Right cardiac atrium (tissue), 5 donors: ENCODE measurements at regions of chr2 and their contacts with region 1.

Region 1: DNA sequence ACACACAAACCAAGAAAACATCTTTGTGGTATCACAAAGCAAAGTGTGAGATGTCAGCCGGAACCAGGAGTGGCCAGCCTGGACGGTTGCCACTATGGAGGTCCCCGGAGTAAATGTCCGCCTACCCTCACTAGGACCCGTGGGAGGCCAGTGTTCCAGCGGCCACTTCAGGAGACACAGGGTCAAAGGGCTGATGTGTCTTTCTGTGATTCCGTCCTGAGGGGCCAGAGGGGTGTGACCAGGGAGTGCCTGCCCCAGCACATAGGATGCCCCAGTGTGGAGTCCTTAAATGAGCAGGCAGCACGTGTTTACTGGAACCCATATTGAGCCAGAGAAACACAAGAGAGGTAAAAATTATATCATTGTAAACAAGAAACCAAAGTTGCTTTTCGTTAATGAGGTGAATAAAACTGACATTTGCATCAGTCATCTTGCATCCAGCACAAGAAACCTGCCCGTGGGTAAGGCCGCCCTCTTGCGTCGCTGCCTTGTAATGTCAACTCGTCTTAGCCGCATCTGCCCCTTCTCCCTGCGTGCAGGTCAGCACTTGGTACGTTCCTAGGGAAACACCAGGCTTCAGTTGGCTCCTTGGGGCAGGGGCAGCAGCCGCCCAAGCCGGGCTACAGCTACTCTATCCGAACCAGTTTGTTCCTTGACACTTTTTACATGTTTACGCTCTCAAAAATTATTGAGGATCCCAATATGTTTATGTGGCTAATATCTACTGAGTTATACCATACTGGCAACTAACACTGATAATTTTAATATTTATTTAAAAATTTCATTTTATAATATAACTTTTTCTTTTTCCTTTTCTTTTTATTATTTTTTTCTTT is 46.7 kb upstream of the LAPTM4A start:
- DNase-seq: peak; percentile 82 to 92 (median 89)
- ATAC-seq: peak; percentile 76 to 84
- H3K4me3 ChIP-seq: no peak overlapping the region
- H3K27ac ChIP-seq: no peak overlapping the region
- H3K4me1 ChIP-seq: no peaks in the 10 kb centered on the region
- H3K27me3 ChIP-seq: no peaks in the 10 kb centered on the region

Region 2: DNA sequence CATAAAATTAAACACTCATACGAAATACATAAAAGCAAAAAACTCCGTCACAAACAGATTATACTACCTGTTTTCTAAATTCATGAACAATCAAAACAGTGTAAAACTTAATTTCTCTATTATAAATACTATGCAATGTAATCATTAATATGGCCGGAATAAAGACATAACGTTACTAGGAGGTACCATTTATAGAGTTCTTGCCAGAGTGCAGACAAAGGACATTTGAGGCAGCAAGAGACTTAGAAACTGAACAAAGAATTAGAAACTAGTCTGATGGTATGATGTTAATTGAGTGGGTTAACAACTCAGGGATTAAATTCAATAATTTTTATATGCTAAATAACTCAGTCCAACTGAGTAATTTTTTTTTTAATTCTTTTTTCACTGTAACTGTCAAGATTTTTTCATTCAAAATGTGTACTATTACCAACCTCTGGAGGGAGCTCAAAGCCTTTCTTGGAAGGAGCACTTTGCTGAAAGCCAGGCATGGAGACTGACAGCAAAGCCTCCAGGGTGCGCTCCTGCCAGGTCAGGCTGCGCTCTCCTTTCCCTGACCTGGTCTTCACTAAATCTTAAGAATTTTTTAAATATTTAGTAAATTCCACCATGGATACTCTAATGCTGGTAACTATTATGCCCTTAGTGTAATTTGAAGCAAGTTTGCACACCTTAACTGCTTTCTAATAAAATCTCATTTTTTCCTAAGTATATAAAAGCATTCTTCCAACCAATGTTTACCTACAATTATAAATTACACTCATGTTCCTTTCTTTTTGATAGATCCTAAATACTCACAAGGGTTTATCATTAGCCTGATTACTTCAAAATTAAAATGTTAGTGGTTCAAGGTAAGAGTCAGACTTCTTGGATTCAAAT is 142.3 kb before region 1 on chr2:
- intact Hi-C with region 1: loop called in 2 of 4 experiments (anchors 2 to 5 kb)
- DNase-seq: peak; percentile 28 to 66 (median 59)
- ATAC-seq: peak; percentile 87
- H3K4me3 ChIP-seq: no peak overlapping the region
- H3K27ac ChIP-seq: no peak overlapping the region
- H3K4me1 ChIP-seq: no peaks in the 10 kb centered on the region
- H3K27me3 ChIP-seq: no peaks in the 10 kb centered on the region

Region 3: GRCh38 chr2:20015472-20016083 is 82.5 kb before region 1 on chr2:
- intact Hi-C with region 1: loop called (anchors 2 to 5 kb)
- DNase-seq: no peak
- ATAC-seq: peak; percentile 24 to 34
- H3K4me3 ChIP-seq: no peak overlapping the region
- H3K27ac ChIP-seq: no peak overlapping the region
- H3K4me1 ChIP-seq: no peaks in the 10 kb centered on the region
- H3K27me3 ChIP-seq: no peaks in the 10 kb centered on the region

Region 4: GRCh38 chr2:20207051-20207450 is 109.0 kb after region 1 on chr2:
- intact Hi-C with region 1: no loop called
- DNase-seq: peak in 2 of 3 donors; percentile 31 to 38
- ATAC-seq: no peak
- H3K4me3 ChIP-seq: no peak overlapping the region
- H3K27ac ChIP-seq: no peak overlapping the region
- H3K4me1 ChIP-seq: no peaks in the 10 kb centered on the region
- H3K27me3 ChIP-seq: no peaks in the 10 kb centered on the region